ENCODE measurements at regions of chr5 and their contacts with region 1.

Region 1: DNA sequence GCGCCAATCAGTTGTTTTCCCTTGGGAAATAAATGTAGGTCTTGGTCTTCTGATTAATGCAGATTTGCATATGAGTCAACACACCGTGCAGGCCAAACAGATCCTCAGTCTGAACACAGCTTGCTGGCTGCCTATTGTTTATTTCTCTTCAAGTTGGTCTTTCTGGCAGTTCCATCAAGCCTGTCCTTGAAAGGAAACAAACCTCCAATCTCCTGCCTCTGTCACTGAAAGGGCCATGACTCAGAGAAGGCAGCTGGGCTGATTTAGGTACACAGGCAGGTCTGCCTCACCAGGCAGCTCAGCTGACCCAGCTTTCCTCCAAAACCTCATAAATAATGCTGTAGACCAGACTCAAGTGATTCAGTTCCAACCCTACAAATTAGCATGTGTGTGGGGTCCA is 175.9 kb downstream of the MAN2A1 start:
- DNase-seq: no peak
- ATAC-seq: no peak
- H3K4me3 ChIP-seq: no peak overlapping the region
- H3K4me3 Mint-ChIP-seq: peak overlapping the region in 2 of 10 donors; percentile 13 to 18
- H3K27ac ChIP-seq: no peak overlapping the region
- H3K27ac Mint-ChIP-seq: peak overlapping the region in 6 of 9 donors; percentile 33 to 87 (median 64)
- H3K4me1 ChIP-seq: peaks cover 5 to 18% of the 10 kb centered on the region in 2 donors
- H3K4me1 Mint-ChIP-seq: peaks cover 26 to 90% (median 81%) of the 10 kb centered on the region in 7 donors
- H3K27me3 ChIP-seq: no peaks in the 10 kb centered on the region
- H3K27me3 Mint-ChIP-seq: no peaks in the 10 kb centered on the region

Region 2: GRCh38 chr5:109852371-109853155 is 13.1 kb before region 1 on chr5:
- CTCF ChIA-PET with region 1: interaction called, 3 read pairs
- POLR2A ChIA-PET with region 1: interaction called, 13 read pairs
- intact Hi-C with region 1: loop called in 1 of 2 experiments (anchors 1 kb)
- DNase-seq: no peak
- ATAC-seq: no peak
- H3K4me3 ChIP-seq: no peak overlapping the region
- H3K4me3 Mint-ChIP-seq: peak overlapping the region in 8 of 10 donors; percentile 9 to 75 (median 23)
- H3K27ac ChIP-seq: no peak overlapping the region
- H3K27ac Mint-ChIP-seq: peak overlapping the region in 8 of 9 donors; percentile 63 to 97 (median 84)
- H3K4me1 ChIP-seq: peaks cover 61 to 71% of the 10 kb centered on the region in 2 donors
- H3K4me1 Mint-ChIP-seq: peaks cover 47 to 99% (median 91%) of the 10 kb centered on the region in 7 donors
- H3K27me3 ChIP-seq: no peaks in the 10 kb centered on the region
- H3K27me3 Mint-ChIP-seq: no peaks in the 10 kb centered on the region

Region 3: GRCh38 chr5:109876941-109877650 is 11.5 kb after region 1 on chr5:
- CTCF ChIA-PET with region 1: no interaction called
- POLR2A ChIA-PET with region 1: no interaction called
- intact Hi-C with region 1: loop called in 1 of 2 experiments (anchors 1 kb)
- DNase-seq: no peak
- ATAC-seq: no peak
- H3K4me3 ChIP-seq: no peak overlapping the region
- H3K4me3 Mint-ChIP-seq: peak overlapping the region in 1 of 10 donors; percentile 75
- H3K27ac ChIP-seq: no peak overlapping the region
- H3K27ac Mint-ChIP-seq: peak overlapping the region in 2 of 9 donors; percentile 42 to 76
- H3K4me1 ChIP-seq: peaks cover 0 to 17% of the 10 kb centered on the region in 2 donors
- H3K4me1 Mint-ChIP-seq: peaks cover 17 to 61% (median 45%) of the 10 kb centered on the region in 7 donors
- H3K27me3 ChIP-seq: no peaks in the 10 kb centered on the region
- H3K27me3 Mint-ChIP-seq: no peaks in the 10 kb centered on the region

Measured in naive thymus-derived CD4-positive, alpha-beta T cell (primary cell).